Activated naive CD4-positive, alpha-beta T cell treated with anti-CD3 and anti-CD28 coated beads for 36 hours (primary cell): ENCODE measurements at regions of chrX and their contacts with region 1.

Region 1: DNA sequence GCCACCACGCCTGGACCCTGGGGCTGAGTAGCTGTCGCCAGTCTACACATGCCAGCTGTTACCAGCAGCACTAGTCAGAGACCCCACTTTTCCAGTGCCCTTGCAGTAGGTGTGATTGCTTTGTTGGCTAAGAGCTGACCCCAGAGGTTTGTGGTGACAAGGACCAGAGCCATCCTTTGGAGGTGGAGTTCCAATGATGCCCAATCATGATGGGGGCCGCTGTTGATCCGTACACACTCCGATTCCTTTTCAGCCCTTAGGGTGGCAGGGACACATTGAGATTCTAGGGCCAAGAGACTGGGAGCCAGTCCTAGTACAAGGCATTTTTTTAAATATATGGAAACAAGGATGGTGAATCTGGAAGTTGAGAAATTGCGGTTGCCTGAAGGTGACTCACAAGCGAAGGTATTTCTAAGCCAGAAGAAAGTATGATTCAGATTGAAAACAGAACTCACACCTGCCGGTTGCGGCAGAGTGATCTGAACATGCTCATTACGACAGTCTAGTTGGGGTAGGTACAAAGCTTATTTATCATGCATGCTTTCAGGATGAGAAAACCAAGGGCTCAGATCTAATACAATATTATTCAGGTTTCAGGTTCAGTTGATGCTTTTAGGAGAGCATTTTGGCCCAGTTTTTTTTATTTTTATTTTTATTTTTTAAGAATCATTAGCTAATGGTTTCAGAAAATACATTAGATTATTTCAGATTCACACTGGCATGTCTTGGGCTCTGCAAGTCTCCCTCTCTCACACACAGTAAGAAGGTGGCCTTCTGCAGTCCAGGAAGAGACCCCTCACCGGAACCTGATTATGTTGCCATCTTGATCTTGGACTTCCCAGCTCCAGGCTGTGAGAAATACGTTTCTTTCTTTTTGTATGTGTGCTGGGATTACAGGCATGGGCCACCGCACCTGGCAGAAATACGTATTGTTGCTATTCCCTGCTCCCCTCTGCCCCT is 43.4 kb downstream of the SHROOM2 start:
- DNase-seq: peak; percentile 71
- H3K4me3 Mint-ChIP-seq: no peak overlapping the region
- H3K27ac Mint-ChIP-seq: no peak overlapping the region
- H3K4me1 Mint-ChIP-seq: peaks cover 4% of the 10 kb centered on the region
- H3K27me3 Mint-ChIP-seq: peaks cover 13% of the 10 kb centered on the region

Region 2: GRCh38 chrX:9942086-9942485 is 112.5 kb after region 1 on chrX:
- CTCF ChIA-PET with region 1: no interaction called
- intact Hi-C with region 1: loop called (anchors 1 kb)
- DNase-seq: peak; percentile 69
- H3K4me3 Mint-ChIP-seq: no peak overlapping the region
- H3K27ac Mint-ChIP-seq: no peak overlapping the region
- H3K4me1 Mint-ChIP-seq: peaks cover 6% of the 10 kb centered on the region
- H3K27me3 Mint-ChIP-seq: peaks cover 12% of the 10 kb centered on the region